Activated CD4-positive, alpha-beta T cell treated with anti-CD3 and anti-CD28 coated beads for 36 hours (primary cell): ENCODE measurements at regions of chr12 and their contacts with region 1.

Region 1: DNA sequence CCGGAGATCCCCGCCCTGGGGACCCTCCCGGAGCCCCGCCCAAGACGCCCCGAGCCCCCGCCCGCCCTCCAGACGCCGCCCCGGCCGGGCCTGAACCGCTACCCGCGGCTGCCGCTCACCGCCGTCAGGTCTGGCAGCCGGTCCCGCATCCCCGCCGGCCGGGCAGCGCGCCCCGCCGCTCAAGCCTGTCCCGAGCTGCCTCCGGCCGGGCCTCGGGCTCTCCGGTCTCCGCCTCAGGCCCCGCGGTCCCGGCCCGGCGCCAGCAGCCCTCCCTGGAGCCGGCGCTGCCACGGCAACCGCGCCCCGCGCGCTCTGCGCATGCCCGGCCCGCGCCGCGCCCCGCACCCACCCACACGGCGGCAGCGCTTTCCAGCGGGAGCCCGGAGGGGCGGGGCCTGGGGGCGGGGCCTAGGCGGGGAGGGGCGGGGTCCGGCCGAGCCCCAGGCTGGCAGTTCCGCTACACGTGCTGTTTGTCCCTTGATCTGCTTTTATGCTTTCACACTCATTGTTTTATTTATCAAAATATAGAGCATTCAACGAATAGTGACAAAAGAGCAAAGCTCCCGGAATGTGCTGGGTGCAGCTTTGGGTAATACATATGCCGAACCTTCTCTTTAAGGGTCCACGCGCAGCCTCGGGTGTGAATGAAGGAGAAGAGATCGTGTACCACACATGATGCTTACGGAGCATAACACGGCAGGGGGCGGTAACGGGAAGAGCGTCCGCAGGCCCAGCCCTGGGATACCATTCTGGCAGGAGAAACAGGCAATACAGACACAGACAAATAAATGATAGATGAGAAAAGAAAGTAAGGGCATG is at the start of gene STX2:
- DNase-seq: peak; percentile 94
- ATAC-seq: peak; percentile 89
- H3K4me3 Mint-ChIP-seq: peak within 1 kb of the TSS; percentile 80
- H3K27ac Mint-ChIP-seq: peak within 1 kb of the TSS; percentile 76
- H3K4me1 Mint-ChIP-seq: peaks cover 32% of the 10 kb centered on the region
- H3K27me3 Mint-ChIP-seq: no peaks in the 10 kb centered on the region
- total RNA-seq, gene STX2: 13.1 to 16.2 TPM

Region 2: DNA sequence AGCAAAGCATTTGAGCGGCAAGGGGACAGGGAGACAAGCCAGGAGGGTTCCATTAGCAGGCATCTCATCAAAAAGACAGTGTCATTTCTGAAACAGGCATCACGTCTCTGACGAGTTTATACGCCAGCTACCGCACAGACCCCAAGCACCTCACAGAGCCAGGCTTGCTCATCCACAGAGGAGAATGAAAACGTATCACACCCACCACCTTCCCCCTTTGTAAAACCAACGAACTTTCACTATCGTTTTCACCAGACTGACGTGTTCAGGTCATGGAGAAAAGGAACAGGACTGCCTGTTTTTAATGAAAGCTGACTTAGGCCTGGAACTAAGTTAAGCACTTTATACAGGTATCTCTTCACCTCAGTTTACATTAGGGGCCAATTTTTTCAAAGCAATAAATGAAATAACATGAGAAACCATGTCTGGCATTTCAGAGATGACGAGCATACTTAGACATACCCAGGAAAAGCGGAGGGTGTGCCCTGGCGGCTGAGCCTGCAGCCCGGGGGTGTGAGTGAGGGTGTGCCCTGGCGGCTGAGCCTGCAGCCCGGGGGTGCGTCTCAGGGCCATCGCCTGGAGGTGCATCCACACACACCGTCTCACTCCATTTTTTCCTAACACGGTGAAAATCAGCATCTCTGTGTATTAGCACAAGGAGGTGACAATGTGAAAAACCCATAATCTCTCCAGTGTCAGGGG is 42.0 kb before region 1 on chr12:
- CTCF ChIA-PET with region 1: no interaction called
- POLR2A ChIA-PET with region 1: no interaction called
- intact Hi-C with region 1: loop called in 1 of 2 experiments (anchors 2 kb)
- DNase-seq: peak; percentile 76
- ATAC-seq: peak; percentile 96
- H3K4me3 Mint-ChIP-seq: peak overlapping the region; percentile 49
- H3K27ac Mint-ChIP-seq: peak overlapping the region; percentile 88
- H3K4me1 Mint-ChIP-seq: peaks cover 19% of the 10 kb centered on the region
- H3K27me3 Mint-ChIP-seq: no peaks in the 10 kb centered on the region

Region 3: GRCh38 chr12:130818635-130819576 is 20.3 kb before region 1 on chr12:
- CTCF ChIA-PET with region 1: interaction called, 4 read pairs
- POLR2A ChIA-PET with region 1: no interaction called
- intact Hi-C with region 1: loop called in 1 of 2 experiments (anchors 1 kb)
- DNase-seq: peak; percentile 89
- ATAC-seq: peak; percentile 92
- H3K4me3 Mint-ChIP-seq: peak overlapping the region; percentile 77
- H3K27ac Mint-ChIP-seq: peak overlapping the region; percentile 86
- H3K4me1 Mint-ChIP-seq: peaks cover 6% of the 10 kb centered on the region
- H3K27me3 Mint-ChIP-seq: no peaks in the 10 kb centered on the region

Region 4: DNA sequence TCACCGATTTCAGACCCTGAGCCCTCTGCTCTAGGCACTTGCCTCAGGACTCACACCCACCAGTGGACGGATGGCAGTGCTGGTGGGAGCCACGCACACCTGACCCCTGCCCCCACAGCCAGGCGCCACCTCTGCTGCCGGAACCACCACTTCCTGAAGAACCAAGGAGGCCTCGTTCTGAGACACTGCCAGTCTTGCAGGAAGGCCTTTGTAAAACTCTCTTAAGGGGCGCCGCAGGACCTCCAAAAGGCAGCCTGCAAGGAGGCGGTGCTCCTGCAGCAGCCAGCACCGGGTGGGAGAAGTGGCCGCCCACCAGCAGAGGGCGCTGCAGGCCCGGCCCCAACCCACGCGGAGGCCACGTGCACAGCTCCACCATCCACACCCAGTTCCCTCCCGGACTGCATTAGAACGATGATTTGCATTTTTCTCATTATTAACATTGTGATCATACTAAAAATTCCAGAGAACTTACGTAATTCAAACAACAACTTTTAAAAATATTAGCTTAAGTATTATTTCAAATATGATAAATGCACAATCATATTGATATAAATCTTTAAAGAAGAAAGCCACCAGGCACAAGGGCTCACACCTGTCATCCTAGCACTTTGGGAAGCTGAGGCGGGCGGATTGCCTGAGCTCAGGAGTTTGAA is 12.9 kb before region 1 on chr12:
- CTCF ChIA-PET with region 1: interaction called, 48 read pairs
- POLR2A ChIA-PET with region 1: no interaction called
- intact Hi-C with region 1: no loop called
- DNase-seq: peak; percentile 88
- ATAC-seq: peak; percentile 97
- H3K4me3 Mint-ChIP-seq: no peak overlapping the region
- H3K27ac Mint-ChIP-seq: no peak overlapping the region
- H3K4me1 Mint-ChIP-seq: peaks cover 11% of the 10 kb centered on the region
- H3K27me3 Mint-ChIP-seq: no peaks in the 10 kb centered on the region

Region 5: DNA sequence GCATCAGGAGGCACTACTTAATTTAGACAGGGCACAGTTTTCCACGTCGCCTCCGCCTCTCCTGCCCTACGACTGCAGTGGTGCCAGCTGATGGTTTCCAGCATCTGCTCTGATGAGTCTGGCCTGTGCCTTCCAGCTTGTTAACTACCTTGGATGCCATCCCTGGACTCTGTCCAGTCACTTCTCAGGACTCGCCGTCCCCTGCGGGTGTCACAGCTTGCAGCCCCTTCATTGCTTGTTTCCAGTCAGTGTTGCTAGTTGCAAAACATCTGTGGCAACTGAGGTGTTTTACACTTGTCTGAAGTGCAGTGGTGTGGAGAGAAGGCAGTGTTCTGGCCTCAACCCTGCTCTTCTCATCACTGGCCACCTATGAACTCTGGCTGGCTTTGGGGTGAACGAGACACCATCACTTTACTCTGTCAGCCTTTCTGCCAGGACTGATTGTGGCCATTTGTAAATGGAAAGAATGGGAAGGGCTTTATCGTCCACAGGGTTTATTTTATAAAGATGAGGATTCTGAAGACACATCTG is 122.8 kb after region 1 on chr12:
- CTCF ChIA-PET with region 1: no interaction called
- POLR2A ChIA-PET with region 1: no interaction called
- intact Hi-C with region 1: no loop called
- DNase-seq: no peak
- ATAC-seq: no peak
- H3K4me3 Mint-ChIP-seq: no peak overlapping the region
- H3K27ac Mint-ChIP-seq: no peak overlapping the region
- H3K4me1 Mint-ChIP-seq: no peaks in the 10 kb centered on the region
- H3K27me3 Mint-ChIP-seq: peaks cover 2% of the 10 kb centered on the region

Region 6: DNA sequence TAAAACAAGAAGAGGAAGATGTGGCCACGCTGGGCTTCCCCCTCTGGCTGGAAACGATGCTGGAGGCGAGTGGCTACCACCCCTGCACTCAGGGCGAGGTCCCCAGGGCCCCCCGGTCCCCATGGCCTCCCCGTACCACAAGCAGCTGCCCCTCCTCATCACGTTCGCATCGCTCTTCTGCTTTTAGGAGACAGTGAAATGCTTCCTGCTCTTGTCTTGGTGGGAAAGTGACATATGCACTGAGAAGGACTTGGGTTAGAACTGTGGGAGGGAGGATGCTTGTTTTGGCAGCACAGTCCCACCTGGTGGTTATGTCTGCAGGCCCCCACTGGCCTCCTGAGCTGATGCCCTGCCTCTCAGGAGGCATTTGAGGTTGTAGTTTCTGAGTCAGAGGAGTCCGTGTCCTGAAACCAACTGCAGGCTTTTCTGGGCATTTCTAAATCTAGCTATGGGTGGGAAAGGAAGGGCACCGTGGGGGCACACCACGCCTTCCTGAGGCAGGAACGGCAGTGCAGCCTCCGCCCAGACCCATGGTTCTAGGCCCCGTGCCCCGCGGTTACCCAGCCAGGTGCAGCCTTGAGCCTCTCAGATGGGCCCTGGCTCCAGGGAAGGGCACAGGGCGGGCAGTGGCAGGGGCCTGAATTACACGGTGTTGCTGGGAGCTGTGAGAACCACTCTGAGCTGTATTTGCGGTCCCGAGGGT is 253.9 kb after region 1 on chr12:
- CTCF ChIA-PET with region 1: no interaction called
- POLR2A ChIA-PET with region 1: no interaction called
- intact Hi-C with region 1: loop called in 1 of 2 experiments (anchors 5 kb)
- DNase-seq: peak; percentile 70
- ATAC-seq: peak; percentile 70
- H3K4me3 Mint-ChIP-seq: peak overlapping the region; percentile 45
- H3K27ac Mint-ChIP-seq: peak overlapping the region; percentile 59
- H3K4me1 Mint-ChIP-seq: peaks cover 21% of the 10 kb centered on the region
- H3K27me3 Mint-ChIP-seq: peaks cover 3% of the 10 kb centered on the region